Psoas muscle (tissue), 8 donors: ENCODE measurements at regions of chr1 and their contacts with region 1.

Region 1: DNA sequence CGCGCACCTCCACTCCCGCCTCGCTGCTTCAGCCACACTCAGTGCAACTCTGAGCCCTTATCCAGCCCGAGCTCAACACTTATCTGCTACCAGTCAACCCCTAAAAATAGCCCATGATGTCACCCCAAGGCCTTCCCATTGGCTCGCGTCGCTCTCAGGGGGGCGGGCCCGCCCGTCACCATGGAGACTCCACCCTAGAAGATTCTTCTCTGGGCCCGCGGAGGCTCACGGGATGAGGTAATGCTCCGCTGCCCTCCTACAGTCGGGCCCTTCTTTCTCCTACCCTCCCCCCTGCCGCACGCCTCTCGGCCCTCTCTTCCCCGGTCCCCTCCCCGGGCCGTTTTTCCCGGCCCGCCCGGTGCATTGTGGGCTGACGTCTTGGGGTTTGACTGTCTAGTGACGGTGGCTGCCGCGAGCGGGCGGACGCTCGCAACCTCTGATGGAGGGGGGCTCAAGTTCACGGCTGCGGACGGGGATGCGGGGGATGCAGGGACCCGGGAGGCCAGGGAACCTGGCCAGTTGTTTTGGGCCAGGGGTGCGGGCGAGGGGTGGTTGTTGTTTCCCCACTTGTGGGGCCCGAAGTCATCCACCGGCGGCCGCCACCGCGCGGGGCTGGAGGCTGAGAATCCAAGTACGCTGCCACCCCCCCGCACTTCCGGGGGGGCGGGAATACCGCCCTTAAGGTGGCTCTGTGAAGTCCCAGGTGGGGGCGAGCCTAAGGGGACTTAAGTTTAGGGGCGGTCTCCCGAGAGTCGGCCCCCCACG is at the start of gene JUN:
- DNase-seq: peak; percentile 100
- ATAC-seq: peak; percentile 76 to 89 (median 80)
- H3K4me3 ChIP-seq: peak within 1 kb of the TSS; percentile 99
- H3K27ac ChIP-seq: peak within 1 kb of the TSS; percentile 100
- H3K4me1 ChIP-seq: peaks cover 19% of the 10 kb centered on the region
- H3K27me3 ChIP-seq: no peaks in the 10 kb centered on the region
- CTCF ChIP-seq: no peak
- total RNA-seq, gene JUN: 93.8 to 213 (median 164) TPM

Region 2: GRCh38 chr1:58710190-58711085 is 73.7 kb before region 1 on chr1:
- intact Hi-C with region 1: no loop called
- DNase-seq: no peak
- ATAC-seq: no peak
- H3K4me3 ChIP-seq: no peak overlapping the region
- H3K27ac ChIP-seq: no peak overlapping the region
- H3K4me1 ChIP-seq: no peaks in the 10 kb centered on the region
- H3K27me3 ChIP-seq: no peaks in the 10 kb centered on the region
- CTCF ChIP-seq: no peak

Region 3: GRCh38 chr1:58816072-58816746 is 32.0 kb after region 1 on chr1:
- intact Hi-C with region 1: loop called in 1 of 2 experiments (anchors 1 kb)
- DNase-seq: peak; percentile 93 to 95
- ATAC-seq: peak; percentile 89 to 94 (median 92)
- H3K4me3 ChIP-seq: peak overlapping the region; percentile 65
- H3K27ac ChIP-seq: peak overlapping the region; percentile 97
- H3K4me1 ChIP-seq: no peaks in the 10 kb centered on the region
- H3K27me3 ChIP-seq: no peaks in the 10 kb centered on the region
- CTCF ChIP-seq: no peak

Region 4: GRCh38 chr1:58848818-58849411 is 64.7 kb after region 1 on chr1:
- intact Hi-C with region 1: no loop called
- DNase-seq: peak; percentile 82 to 83
- ATAC-seq: peak; percentile 52 to 93 (median 83)
- H3K4me3 ChIP-seq: no peak overlapping the region
- H3K27ac ChIP-seq: peak overlapping the region; percentile 61
- H3K4me1 ChIP-seq: peaks cover 5% of the 10 kb centered on the region
- H3K27me3 ChIP-seq: no peaks in the 10 kb centered on the region
- CTCF ChIP-seq: no peak

Region 5: GRCh38 chr1:58968360-58968952 is 184.3 kb after region 1 on chr1:
- intact Hi-C with region 1: loop called in 1 of 2 experiments (anchors 2 kb)
- DNase-seq: peak; percentile 85 to 93
- ATAC-seq: peak; percentile 36 to 61 (median 54)
- H3K4me3 ChIP-seq: peak overlapping the region; percentile 23
- H3K27ac ChIP-seq: peak overlapping the region; percentile 97
- H3K4me1 ChIP-seq: peaks cover 57% of the 10 kb centered on the region
- H3K27me3 ChIP-seq: no peaks in the 10 kb centered on the region
- CTCF ChIP-seq: peak; percentile 12

Region 6: GRCh38 chr1:59143133-59143487 is 358.9 kb after region 1 on chr1:
- intact Hi-C with region 1: loop called in 1 of 2 experiments (anchors 2 kb)
- DNase-seq: no peak
- ATAC-seq: peak; percentile 16 to 38 (median 23)
- H3K4me3 ChIP-seq: no peak overlapping the region
- H3K27ac ChIP-seq: peak overlapping the region; percentile 69
- H3K4me1 ChIP-seq: peaks cover 46% of the 10 kb centered on the region
- H3K27me3 ChIP-seq: no peaks in the 10 kb centered on the region
- CTCF ChIP-seq: no peak

Region 7: DNA sequence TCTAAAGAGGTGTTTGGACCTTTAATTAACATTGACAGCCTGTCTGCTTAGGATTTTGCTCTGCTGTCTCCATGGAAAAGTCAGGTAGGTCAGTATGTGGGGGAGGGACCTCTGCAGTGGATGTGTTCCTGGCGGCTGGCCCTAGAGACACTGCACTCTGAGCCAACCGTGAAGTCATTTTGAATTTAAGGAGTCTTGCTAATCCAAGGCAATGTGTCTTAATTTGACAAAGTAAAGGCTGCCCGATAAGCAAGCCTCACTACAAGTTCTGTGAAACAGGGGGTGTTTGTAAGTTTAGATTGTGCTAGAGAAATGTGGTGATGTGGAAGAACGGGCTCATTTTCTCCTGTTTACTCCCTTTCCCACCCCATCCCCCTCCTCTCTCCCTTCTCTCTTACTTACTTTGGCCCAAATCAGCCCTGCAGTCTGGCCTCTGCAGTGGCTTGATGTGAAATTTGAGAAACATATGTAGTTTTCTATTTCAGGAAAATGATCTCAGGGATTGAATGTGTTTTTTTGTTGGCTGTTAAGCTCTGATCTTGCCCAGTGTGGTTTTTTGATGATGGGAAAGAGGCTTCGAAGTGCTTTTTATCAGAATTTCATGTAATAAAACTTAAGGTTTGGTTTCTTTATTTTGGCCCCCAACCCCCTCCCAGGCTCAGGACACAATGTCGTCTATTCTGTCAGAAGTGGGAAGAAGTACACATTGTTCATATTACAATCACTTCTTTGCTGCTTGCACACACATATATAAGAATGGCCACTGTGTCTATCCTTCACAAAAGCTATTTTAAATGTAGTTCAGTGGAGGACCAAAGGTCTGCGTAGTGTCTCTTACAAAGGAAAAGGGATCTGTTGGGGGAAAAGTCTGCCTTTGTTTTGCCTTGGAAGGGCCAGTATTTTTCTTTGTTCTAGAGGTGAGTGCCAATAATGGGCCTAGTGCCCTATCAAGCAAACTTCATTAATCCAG is 609.3 kb after region 1 on chr1:
- intact Hi-C with region 1: loop called (anchors 5 kb)
- DNase-seq: peak; percentile 77 to 91
- ATAC-seq: peak; percentile 92 to 96 (median 94)
- H3K4me3 ChIP-seq: peak overlapping the region; percentile 49
- H3K27ac ChIP-seq: peak overlapping the region; percentile 93
- H3K4me1 ChIP-seq: peaks cover 69% of the 10 kb centered on the region
- H3K27me3 ChIP-seq: no peaks in the 10 kb centered on the region
- CTCF ChIP-seq: no peak

Region 8: GRCh38 chr1:59707178-59707791 is 923.1 kb after region 1 on chr1:
- intact Hi-C with region 1: loop called in 1 of 2 experiments (anchors 5 kb)
- DNase-seq: peak; percentile 55 to 69
- ATAC-seq: peak; percentile 75 to 85 (median 82)
- H3K4me3 ChIP-seq: no peak overlapping the region
- H3K27ac ChIP-seq: peak overlapping the region; percentile 78
- H3K4me1 ChIP-seq: peaks cover 55% of the 10 kb centered on the region
- H3K27me3 ChIP-seq: no peaks in the 10 kb centered on the region
- CTCF ChIP-seq: no peak